ENCODE measurements at regions of chr4 and their contacts with region 1.

Region 1: DNA sequence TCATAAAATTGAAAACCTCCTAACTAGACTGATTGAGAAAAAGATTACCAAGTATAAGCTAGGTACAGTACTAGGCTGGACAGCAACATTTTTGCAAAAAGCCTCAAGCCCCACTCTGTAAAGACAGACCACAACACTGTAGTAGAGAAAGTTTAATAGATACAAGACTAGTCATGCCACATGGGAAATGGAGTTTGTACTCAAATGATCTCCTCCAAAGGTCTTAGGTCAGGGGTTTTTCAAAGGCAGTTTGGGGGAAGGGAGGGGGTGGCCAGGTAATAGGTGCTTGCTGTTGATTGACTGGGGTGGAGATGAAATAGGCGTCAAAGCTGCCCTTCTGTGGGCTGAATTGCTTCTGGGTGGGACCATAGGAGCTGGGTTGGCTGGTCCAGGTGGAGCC is 14.2 kb downstream of the CNGA1 start:
- DNase-seq: no peak
- H3K4me3 Mint-ChIP-seq: no peak overlapping the region
- H3K27ac Mint-ChIP-seq: no peak overlapping the region
- H3K4me1 Mint-ChIP-seq: no peaks in the 10 kb centered on the region
- H3K27me3 Mint-ChIP-seq: peaks cover 6% of the 10 kb centered on the region

Region 2: DNA sequence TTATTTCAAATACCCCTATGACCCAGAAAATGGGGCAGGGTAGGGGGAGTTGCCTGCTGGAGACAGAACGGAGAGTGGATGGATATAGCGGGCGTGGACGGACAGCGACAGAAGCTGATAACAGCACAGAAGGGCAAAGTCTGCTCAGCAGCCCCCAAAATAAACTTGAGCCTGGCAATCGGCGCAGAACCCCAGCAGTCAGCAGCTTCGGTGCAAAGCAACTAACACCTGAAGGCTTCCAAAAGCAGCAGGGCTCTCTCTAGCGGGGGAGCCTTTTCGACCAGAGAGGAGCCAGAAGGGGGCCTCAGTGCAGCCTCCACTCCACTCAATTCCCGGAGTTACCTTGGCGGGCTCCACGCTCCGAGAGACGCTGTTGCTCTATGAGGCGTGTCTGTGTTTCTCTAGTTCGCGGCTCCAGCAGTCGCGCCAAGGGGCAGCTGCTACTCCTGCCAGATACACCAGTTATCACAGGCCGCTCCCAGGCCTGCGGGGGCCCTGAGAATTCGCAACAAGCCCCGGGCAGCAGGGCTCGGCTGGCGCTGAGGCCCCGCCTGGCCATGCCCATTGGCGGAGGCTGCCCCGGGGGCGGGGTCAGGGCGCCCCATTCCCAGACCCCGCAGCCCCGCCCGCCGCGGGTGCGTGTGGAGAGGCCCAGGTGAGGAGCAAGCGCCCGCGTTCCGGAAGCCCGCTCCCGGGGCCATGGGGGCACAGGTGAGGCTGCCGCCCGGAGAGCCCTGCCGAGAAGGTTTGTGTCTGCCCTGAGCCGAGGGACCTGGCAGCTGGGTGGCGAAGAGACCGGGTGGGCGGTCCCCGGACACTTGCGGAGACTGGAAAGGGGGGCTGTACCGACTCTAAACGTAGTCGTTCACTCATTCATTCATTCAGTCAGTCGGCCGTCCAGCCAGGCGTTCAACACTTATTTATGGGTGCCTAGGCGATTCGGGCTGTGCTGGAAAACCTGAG is 14.2 kb after region 1 on chr4 and contains the starts of genes CNGA1 and NIPAL1:
- CTCF ChIA-PET with region 1: interaction called, 11 read pairs
- POLR2A ChIA-PET with region 1: no interaction called
- intact Hi-C with region 1: no loop called
- DNase-seq: peak; percentile 70
- H3K4me3 Mint-ChIP-seq: peak within 1 kb of the TSS; percentile 73
- H3K27ac Mint-ChIP-seq: no peak within 1 kb of the TSS
- H3K4me1 Mint-ChIP-seq: peaks cover 21% of the 10 kb centered on the region
- H3K27me3 Mint-ChIP-seq: peaks cover 25% of the 10 kb centered on the region
- total RNA-seq, gene CNGA1: 0.70 TPM in 1 of 2 experiments, not detected in the other
- total RNA-seq, gene NIPAL1: 1.3 to 1.9 TPM

Region 3: GRCh38 chr4:48109413-48110263 is 107.4 kb after region 1 on chr4:
- CTCF ChIA-PET with region 1: interaction called, 17 read pairs
- POLR2A ChIA-PET with region 1: no interaction called
- intact Hi-C with region 1: no loop called
- DNase-seq: no peak
- H3K4me3 Mint-ChIP-seq: no peak overlapping the region
- H3K27ac Mint-ChIP-seq: no peak overlapping the region
- H3K4me1 Mint-ChIP-seq: peaks cover 47% of the 10 kb centered on the region
- H3K27me3 Mint-ChIP-seq: no peaks in the 10 kb centered on the region